MCF 10A (cell line): ENCODE measurements at regions of chr4 and their contacts with region 1.

Region 1: GRCh38 chr4:113979148-113979904 is at the start of gene ARSJ:
- DNase-seq: peak; percentile 87
- H3K4me3 Mint-ChIP-seq: peak within 1 kb of the TSS; percentile 94
- H3K27ac Mint-ChIP-seq: peak within 1 kb of the TSS; percentile 95
- H3K4me1 Mint-ChIP-seq: peaks cover 19% of the 10 kb centered on the region
- H3K27me3 Mint-ChIP-seq: no peaks in the 10 kb centered on the region
- CTCF ChIP-seq: peak; percentile 34
- total RNA-seq, gene ARSJ: 36.2 and 50.7 TPM in 2 replicates

Region 2: GRCh38 chr4:113781439-113782040 is 197.8 kb before region 1 on chr4:
- CTCF ChIA-PET with region 1: no interaction called
- POLR2A ChIA-PET with region 1: interaction called, 10 read pairs
- intact Hi-C with region 1: loop called (anchors 5 kb)
- DNase-seq: peak; percentile 53
- H3K4me3 Mint-ChIP-seq: no peak overlapping the region
- H3K27ac Mint-ChIP-seq: no peak overlapping the region
- H3K4me1 Mint-ChIP-seq: peaks cover 20% of the 10 kb centered on the region
- H3K27me3 Mint-ChIP-seq: no peaks in the 10 kb centered on the region
- CTCF ChIP-seq: peak; percentile 38

Region 3: GRCh38 chr4:113958766-113959538 is 20.4 kb before region 1 on chr4:
- CTCF ChIA-PET with region 1: interaction called, 18 read pairs
- POLR2A ChIA-PET with region 1: interaction called, 125 read pairs
- intact Hi-C with region 1: loop called (anchors 1 kb)
- DNase-seq: peak; percentile 89
- H3K4me3 Mint-ChIP-seq: peak overlapping the region; percentile 44
- H3K27ac Mint-ChIP-seq: peak overlapping the region; percentile 90
- H3K4me1 Mint-ChIP-seq: peaks cover 67% of the 10 kb centered on the region
- H3K27me3 Mint-ChIP-seq: no peaks in the 10 kb centered on the region
- CTCF ChIP-seq: no peak

Region 4: GRCh38 chr4:114015444-114015899 is 36.1 kb after region 1 on chr4:
- CTCF ChIA-PET with region 1: no interaction called
- POLR2A ChIA-PET with region 1: interaction called, 29 read pairs
- intact Hi-C with region 1: loop called (anchors 1 kb)
- DNase-seq: peak; percentile 98
- H3K4me3 Mint-ChIP-seq: peak overlapping the region; percentile 35
- H3K27ac Mint-ChIP-seq: peak overlapping the region; percentile 87
- H3K4me1 Mint-ChIP-seq: peaks cover 28% of the 10 kb centered on the region
- H3K27me3 Mint-ChIP-seq: no peaks in the 10 kb centered on the region
- CTCF ChIP-seq: no peak

Region 5: DNA sequence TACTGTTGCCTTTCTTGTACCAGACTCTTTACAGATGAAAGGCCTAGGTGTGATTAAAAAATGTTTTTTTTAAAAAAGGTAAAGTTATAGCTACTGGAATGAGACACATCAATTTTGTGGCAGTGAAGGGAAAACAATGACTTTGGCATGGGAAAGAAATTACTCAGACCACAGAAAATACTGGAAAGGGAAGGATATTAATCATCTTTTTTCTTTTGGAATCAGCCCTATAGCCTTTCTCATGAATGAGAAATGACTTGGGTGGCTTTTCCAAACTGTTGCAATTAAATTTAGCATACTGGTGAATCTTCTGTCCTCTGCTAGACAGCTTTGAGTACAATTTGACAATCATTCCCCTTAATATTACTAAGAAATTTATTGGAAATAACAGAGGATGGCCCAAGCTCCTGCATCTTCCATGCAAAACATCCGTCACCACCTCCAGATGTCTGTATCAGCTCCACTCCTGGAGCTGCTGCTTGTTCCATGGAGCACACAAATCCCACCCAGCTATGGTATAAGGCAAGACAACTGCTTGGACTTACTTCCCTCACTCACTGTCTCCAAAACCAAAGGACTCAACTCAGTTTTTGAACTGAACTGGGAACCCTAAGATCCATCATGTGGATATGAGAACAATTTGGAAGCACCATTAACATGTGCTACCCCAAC is 97.7 kb after region 1 on chr4:
- CTCF ChIA-PET with region 1: interaction called, 17 read pairs
- POLR2A ChIA-PET with region 1: interaction called, 6 read pairs
- intact Hi-C with region 1: no loop called
- DNase-seq: peak; percentile 22
- H3K4me3 Mint-ChIP-seq: no peak overlapping the region
- H3K27ac Mint-ChIP-seq: peak overlapping the region; percentile 23
- H3K4me1 Mint-ChIP-seq: peaks cover 9% of the 10 kb centered on the region
- H3K27me3 Mint-ChIP-seq: no peaks in the 10 kb centered on the region
- CTCF ChIP-seq: no peak

Region 6: GRCh38 chr4:114272226-114272625 is 292.9 kb after region 1 on chr4:
- CTCF ChIA-PET with region 1: no interaction called
- POLR2A ChIA-PET with region 1: no interaction called
- intact Hi-C with region 1: loop called (anchors 5 kb)
- DNase-seq: peak; percentile 82
- H3K4me3 Mint-ChIP-seq: no peak overlapping the region
- H3K27ac Mint-ChIP-seq: peak overlapping the region; percentile 83
- H3K4me1 Mint-ChIP-seq: peaks cover 18% of the 10 kb centered on the region
- H3K27me3 Mint-ChIP-seq: no peaks in the 10 kb centered on the region
- CTCF ChIP-seq: no peak